ENCODE measurements at regions of chr5 and their contacts with region 1.

Region 1: DNA sequence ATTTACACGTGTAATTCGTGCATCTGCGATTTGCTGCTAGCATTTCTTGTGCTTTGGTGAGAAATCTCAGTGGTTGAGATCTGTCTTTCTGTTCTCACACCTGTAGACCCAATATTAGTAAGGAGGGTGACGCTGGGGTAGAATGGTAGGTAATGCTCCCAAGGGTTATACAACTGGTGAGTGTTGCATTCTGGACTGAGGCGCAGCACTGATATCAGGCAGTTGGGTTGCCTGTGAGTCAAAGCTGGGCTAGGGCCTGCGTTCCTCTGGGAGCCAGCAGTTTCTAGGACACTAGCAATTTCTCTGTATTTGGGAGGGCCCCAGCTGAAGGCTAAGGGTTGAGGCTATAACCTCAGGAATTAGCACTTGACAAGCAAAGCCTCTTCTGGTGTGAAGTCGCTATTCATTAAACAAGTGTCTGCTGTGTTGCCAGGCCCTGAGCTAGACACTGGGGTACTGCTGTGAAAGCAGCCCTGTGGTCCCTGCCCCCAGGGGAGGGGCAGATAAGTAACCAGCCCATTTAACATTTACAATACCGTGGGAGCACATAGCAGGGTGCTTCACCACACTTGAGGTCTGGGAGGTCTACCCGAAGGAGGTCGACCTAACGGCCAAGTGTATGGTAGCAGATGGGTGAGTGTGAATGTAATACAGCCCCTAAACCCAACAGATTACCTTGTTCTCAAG is 28.7 kb downstream of the LARP1 start:
- DNase-seq: peak in 2 of 4 experiments; percentile 33 to 50
- ATAC-seq: peak; percentile 55
- H3K4me3 ChIP-seq: no peak overlapping the region
- H3K27ac ChIP-seq: peak overlapping the region; percentile 52; the same call in 2 of the 3 replicates
- H3K4me1 ChIP-seq: peaks cover 38 to 64% of the 10 kb centered on the region in 2 experiments
- H3K27me3 ChIP-seq: no peaks in the 10 kb centered on the region
- CTCF ChIP-seq: no peak
- EP300 ChIP-seq: no peak
- POLR2A ChIP-seq: no peak
- RAD21 ChIP-seq: no peak

Region 2: GRCh38 chr5:154771383-154771901 is 12.5 kb before region 1 on chr5:
- CTCF ChIA-PET with region 1: no interaction called
- POLR2A ChIA-PET with region 1: interaction called, 32 read pairs
- in situ Hi-C with region 1: no loop called
- intact Hi-C with region 1: no loop called
- DNase-seq: no peak
- ATAC-seq: peak; percentile 47
- H3K4me3 ChIP-seq: no peak overlapping the region
- H3K27ac ChIP-seq: peak overlapping the region; percentile 36; the same call in 2 of the 3 replicates
- H3K4me1 ChIP-seq: peaks cover 50 to 71% of the 10 kb centered on the region in 2 experiments
- H3K27me3 ChIP-seq: no peaks in the 10 kb centered on the region
- CTCF ChIP-seq: peak; percentile 19 to 34 (median 23); a peak in 3 of 6 replicates
- EP300 ChIP-seq: no peak
- POLR2A ChIP-seq: no peak
- RAD21 ChIP-seq: no peak

Region 3: DNA sequence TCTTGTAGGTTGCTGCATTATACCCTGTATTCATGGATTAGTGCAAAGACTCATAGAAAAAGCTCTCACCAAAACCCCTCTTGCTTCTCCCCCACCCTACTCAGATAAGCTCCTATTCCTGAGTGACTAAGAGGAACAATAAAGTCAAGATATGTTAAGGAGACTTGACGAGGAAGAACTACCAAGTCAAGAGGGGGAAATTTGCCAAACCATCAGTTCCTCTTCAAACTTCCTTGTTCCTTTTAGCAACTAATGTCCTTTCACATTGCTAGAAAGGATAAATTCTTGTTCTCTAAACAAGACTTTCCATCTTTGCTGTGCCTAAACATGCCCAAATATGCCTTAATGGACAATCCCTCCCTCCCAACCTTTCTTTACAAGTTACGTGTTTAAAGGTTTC is 101.5 kb after region 1 on chr5:
- CTCF ChIA-PET with region 1: no interaction called
- POLR2A ChIA-PET with region 1: no interaction called
- in situ Hi-C with region 1: no loop called
- intact Hi-C with region 1: no loop called
- DNase-seq: no peak
- ATAC-seq: no peak
- H3K4me3 ChIP-seq: no peak overlapping the region
- H3K27ac ChIP-seq: no peak overlapping the region
- H3K4me1 ChIP-seq: no peaks in the 10 kb centered on the region
- H3K27me3 ChIP-seq: no peaks in the 10 kb centered on the region
- CTCF ChIP-seq: no peak
- EP300 ChIP-seq: no peak
- POLR2A ChIP-seq: no peak
- RAD21 ChIP-seq: no peak

Region 4: GRCh38 chr5:154945695-154946301 is 161.9 kb after region 1 on chr5:
- CTCF ChIA-PET with region 1: no interaction called
- POLR2A ChIA-PET with region 1: no interaction called
- in situ Hi-C with region 1: no loop called
- intact Hi-C with region 1: no loop called
- DNase-seq: no peak
- ATAC-seq: no peak
- H3K4me3 ChIP-seq: no peak overlapping the region
- H3K27ac ChIP-seq: no peak overlapping the region
- H3K4me1 ChIP-seq: peaks cover 10 to 32% of the 10 kb centered on the region in 2 experiments; a peak in 3 of 5 replicates
- H3K27me3 ChIP-seq: no peaks in the 10 kb centered on the region
- CTCF ChIP-seq: peak in 2 of 3 experiments; percentile 17 to 60; a peak in 3 of 6 replicates
- EP300 ChIP-seq: no peak
- POLR2A ChIP-seq: no peak
- RAD21 ChIP-seq: peak in 1 of 2 experiments; percentile 25; a peak in 3 of 4 replicates